ENCODE measurements at regions of chr1 and their contacts with region 1.

Region 1: GRCh38 chr1:196071447-196071846 is 536.8 kb downstream of the KCNT2 start:
- DNase-seq: no peak
- ATAC-seq: no peak
- H3K4me3 ChIP-seq: no peak overlapping the region
- H3K27ac ChIP-seq: no peak overlapping the region
- H3K4me1 ChIP-seq: no peaks in the 10 kb centered on the region
- H3K27me3 ChIP-seq: no peaks in the 10 kb centered on the region
- CTCF ChIP-seq: no peak
- EP300 ChIP-seq: no peak
- POLR2A ChIP-seq: no peak
- RAD21 ChIP-seq: no peak

Region 2: DNA sequence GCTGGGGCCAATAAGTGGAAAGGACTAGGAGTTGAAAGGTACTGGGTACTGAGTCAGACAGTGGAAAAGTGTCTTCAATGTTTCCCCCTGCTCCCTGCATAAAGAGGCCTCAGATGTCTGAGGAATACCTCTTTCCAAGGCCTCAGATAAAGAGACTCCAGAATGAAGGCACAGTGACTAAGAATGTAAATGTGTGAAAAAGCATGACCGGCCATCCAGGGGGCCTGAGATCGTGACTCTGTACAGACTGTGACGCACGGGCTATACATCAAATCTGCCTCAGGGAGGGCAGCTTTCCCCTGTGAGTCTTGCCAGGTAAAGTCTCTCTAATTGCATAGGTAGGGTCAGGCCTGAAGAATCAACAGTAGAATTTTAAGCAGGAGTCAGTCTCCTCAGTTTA is 1153.7 kb before region 1 on chr1:
- CTCF ChIA-PET with region 1: no interaction called
- POLR2A ChIA-PET with region 1: no interaction called
- in situ Hi-C with region 1: no loop called
- intact Hi-C with region 1: loop called (anchors 5 kb)
- DNase-seq: no peak
- ATAC-seq: no peak; the same call in none of the 3 replicates
- H3K4me3 ChIP-seq: no peak overlapping the region
- H3K27ac ChIP-seq: no peak overlapping the region
- H3K4me1 ChIP-seq: no peaks in the 10 kb centered on the region; a peak in 1 of 5 replicates
- H3K27me3 ChIP-seq: no peaks in the 10 kb centered on the region
- CTCF ChIP-seq: no peak
- EP300 ChIP-seq: no peak
- POLR2A ChIP-seq: no peak
- RAD21 ChIP-seq: no peak

Region 3: DNA sequence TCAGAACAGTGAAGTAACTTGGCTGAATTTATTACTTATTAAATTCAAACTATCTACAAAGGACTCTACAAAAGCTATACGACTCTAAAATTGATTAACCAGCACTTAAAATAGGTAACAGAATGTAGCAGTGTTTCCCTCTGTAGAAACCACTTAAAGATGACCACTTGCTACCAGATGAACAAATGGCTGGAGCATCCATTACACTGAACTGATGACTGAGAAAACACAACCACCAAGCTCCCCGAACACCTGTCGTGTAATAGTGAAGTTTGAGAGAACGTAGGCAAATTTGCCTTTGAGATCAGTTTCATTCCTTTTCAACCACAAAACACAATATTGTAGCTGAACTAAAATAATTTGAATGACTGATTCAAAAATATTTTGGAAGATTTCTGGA is 310.1 kb after region 1 on chr1:
- CTCF ChIA-PET with region 1: no interaction called
- POLR2A ChIA-PET with region 1: no interaction called
- in situ Hi-C with region 1: no loop called
- intact Hi-C with region 1: no loop called
- DNase-seq: no peak
- ATAC-seq: no peak
- H3K4me3 ChIP-seq: no peak overlapping the region
- H3K27ac ChIP-seq: no peak overlapping the region
- H3K4me1 ChIP-seq: no peaks in the 10 kb centered on the region
- H3K27me3 ChIP-seq: no peaks in the 10 kb centered on the region
- CTCF ChIP-seq: no peak
- EP300 ChIP-seq: no peak
- POLR2A ChIP-seq: no peak
- RAD21 ChIP-seq: no peak

Measured in K562 (cell line).